Psoas muscle (tissue), 8 donors: ENCODE measurements at regions of chr7 and their contacts with region 1.

Region 1: DNA sequence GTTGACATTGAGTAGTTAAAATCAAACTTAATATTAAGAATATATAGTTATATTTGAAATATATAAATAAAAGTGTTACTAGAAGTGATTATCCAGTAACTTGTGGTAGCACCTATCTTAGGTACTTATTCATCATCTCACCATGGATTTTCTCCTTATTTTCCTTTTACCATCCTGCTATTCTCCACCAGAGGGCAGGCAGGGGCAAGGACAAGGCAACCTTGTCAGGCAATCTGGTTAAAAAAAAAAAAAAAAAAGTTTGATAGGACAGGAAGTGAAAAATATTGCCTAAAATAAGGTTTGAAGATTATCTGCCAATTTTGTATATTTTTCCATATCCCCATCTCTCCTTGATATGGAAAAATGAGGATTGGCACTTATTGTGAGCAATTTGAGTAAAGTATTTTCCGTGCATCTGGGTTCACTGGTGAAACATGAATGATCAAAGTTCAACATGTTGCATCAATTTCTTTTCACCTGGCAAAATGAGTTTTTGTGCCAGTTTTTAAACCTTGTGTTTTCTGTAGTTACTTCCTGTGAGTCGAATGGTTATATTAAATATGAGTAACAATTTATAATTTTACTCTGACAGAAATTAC is 256.7 kb downstream of the AGMO start:
- DNase-seq: peak in 1 of 2 donors; percentile 31
- ATAC-seq: peak in 1 of 4 donors; percentile 52
- H3K4me3 ChIP-seq: no peak overlapping the region
- H3K27ac ChIP-seq: no peak overlapping the region
- H3K4me1 ChIP-seq: no peaks in the 10 kb centered on the region
- H3K27me3 ChIP-seq: no peaks in the 10 kb centered on the region
- CTCF ChIP-seq: peak; percentile 75

Region 2: DNA sequence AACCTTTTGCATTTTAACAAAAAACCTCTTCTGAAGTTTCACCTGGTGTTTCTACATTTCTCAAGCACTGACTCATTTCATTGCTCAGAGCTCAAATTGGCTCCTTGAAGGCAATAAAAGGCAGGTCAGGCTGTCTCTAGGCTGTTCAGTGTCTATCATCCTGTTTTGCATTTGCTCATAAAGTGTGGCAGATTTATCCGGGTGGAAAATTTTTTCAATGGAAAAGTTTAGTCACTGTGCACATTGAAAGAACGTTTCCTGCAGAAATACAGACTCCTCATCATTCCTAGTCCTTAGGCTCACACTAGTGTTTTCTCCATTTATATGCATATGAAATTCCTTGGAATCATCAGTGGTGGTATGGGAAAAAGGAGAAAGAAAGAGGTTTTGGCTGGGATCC is 288.3 kb before region 1 on chr7:
- intact Hi-C with region 1: no loop called
- DNase-seq: no peak
- ATAC-seq: no peak
- H3K4me3 ChIP-seq: no peak overlapping the region
- H3K27ac ChIP-seq: no peak overlapping the region
- H3K4me1 ChIP-seq: peaks cover 3% of the 10 kb centered on the region
- H3K27me3 ChIP-seq: no peaks in the 10 kb centered on the region
- CTCF ChIP-seq: no peak

Region 3: DNA sequence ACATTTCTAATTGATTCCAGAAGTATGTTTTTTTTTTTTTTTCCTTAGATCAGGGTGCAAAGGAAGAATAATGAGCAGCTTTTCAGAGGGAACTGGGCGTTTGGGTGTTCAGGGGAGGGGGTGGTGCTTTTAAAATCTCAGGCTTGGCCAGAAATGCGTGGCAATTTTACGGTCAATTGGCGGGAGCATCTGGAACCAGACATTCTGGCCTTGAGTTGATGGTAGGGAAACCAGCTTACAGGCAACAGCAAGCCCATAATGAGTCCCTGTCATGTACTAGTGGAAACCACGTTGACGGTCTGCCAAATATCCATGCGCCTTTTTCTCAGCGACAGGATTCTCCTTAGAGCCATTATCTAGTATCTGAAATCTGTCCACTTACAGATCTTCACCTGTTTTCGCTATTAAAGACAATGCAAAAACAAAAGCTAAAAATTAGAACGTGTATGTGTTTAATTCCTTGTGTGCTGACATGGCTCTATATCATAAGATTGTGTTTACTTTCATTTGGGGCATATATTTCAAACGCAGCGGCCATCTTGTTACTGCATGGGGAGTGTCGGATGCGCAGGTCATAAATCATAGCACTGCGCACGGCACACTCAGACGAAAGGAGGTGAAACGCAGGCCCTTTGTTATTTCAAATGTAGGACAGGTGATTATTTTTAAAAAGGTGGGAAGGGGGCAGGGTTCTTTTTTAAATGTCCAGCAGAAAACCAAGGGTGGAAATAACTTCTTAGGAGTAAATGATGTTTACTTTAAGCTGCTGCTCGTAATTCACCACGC is 47.5 kb after region 1 on chr7:
- intact Hi-C with region 1: loop called in 1 of 2 experiments (anchors 1 kb)
- DNase-seq: no peak
- ATAC-seq: no peak
- H3K4me3 ChIP-seq: no peak overlapping the region
- H3K27ac ChIP-seq: no peak overlapping the region
- H3K4me1 ChIP-seq: no peaks in the 10 kb centered on the region
- H3K27me3 ChIP-seq: no peaks in the 10 kb centered on the region
- CTCF ChIP-seq: no peak